B cell (primary cell): ENCODE measurements at regions of chr17 and their contacts with region 1.

Region 1: DNA sequence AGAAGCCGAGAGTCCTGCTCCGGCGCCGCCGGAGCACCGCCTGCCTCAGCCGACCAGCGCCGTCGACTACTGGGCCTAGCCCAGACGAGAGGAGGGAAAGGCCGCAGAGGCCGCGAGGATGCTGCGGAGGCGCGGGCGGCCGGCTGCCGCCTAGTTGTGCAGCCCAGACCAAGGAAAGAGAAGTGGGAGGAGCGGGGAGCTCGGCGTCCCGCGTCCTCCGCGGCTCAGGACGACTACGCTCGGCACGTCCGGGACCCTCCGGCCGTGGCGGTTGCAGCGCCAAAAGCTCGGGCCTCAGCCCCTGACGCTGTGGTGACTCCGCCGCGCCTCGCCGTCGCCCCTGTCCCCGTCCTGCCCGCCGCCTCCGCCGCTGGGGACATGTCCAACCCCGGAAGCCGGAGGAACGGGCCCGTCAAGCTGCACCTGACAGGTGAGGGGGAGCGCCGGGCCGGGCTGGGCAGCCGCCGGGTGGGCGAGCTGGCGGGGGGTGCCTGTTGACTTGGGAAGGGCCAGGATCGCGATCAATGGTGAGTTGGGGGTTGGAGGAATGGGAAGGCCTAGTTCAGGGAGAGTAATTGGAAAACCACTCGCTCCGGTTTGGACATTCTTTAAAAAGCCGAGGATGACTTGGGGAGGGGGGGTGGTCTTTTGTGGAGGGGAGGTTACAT is 37.7 kb downstream of the RNF135 start:
- DNase-seq: peak; percentile 75
- ATAC-seq: peak; percentile 79
- H3K4me3 ChIP-seq: peak overlapping the region; percentile 47 to 86 (median 69)
- H3K4me3 Mint-ChIP-seq: peak overlapping the region; percentile 96
- H3K27ac ChIP-seq: peak overlapping the region; percentile 41 to 77
- H3K27ac Mint-ChIP-seq: peak overlapping the region; percentile 95
- H3K4me1 ChIP-seq: peaks cover 3 to 12% of the 10 kb centered on the region in 2 donors
- H3K4me1 Mint-ChIP-seq: peaks cover 24% of the 10 kb centered on the region
- H3K27me3 ChIP-seq: no peaks in the 10 kb centered on the region
- H3K27me3 Mint-ChIP-seq: no peaks in the 10 kb centered on the region
- CTCF ChIP-seq: no peak

Region 2: DNA sequence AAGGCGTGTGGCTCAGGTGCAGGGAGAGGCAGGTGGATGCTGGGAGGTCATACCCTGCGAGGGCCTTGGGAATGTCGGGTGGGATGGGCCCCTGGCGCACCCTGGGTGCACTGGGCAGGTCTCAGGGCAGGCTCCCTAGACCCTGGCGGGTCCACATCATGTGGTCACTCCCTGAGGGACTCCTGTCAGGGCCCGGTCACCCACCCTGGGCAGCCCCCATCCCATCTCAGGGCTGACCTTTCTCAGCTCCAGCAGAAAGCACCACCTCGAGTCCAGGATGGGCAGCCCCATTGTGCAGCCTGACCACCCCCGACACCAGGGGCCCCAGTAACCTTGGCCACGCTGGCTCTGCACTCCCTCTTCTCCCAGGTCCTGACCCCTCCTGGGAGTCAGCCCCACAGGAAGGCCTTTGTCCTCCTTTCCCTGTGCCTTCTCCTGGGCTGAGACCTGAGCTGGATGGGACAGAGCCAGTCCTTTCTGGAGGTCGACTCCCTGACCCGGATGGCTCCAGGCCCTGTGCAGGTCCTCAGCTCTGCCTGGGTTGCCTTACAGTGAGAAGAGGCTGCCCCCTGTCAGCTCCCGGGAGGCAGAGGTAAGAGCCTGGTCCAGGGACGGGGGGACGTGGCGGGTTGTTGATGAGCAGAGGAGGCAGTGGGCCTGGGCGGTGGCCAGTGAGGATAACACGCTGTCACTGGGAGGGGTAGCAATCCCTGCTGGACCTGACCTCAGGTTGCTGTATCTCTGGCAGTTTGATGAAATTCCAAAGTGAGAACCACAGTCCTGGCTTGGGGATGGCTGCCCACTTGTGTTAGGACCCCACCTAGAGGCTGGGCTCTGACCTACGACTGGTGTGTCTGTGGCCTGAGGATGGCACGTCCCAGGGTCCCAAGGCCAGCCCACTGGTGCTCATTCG is 453.4 kb before region 1 on chr17:
- CTCF ChIA-PET with region 1: no interaction called
- POLR2A ChIA-PET with region 1: no interaction called
- intact Hi-C with region 1: no loop called
- DNase-seq: peak; percentile 30
- ATAC-seq: no peak
- H3K4me3 ChIP-seq: no peak overlapping the region
- H3K4me3 Mint-ChIP-seq: no peak overlapping the region
- H3K27ac ChIP-seq: no peak overlapping the region
- H3K27ac Mint-ChIP-seq: no peak overlapping the region
- H3K4me1 ChIP-seq: peaks cover 20 to 38% of the 10 kb centered on the region in 2 donors
- H3K4me1 Mint-ChIP-seq: peaks cover 34% of the 10 kb centered on the region
- H3K27me3 ChIP-seq: no peaks in the 10 kb centered on the region
- H3K27me3 Mint-ChIP-seq: no peaks in the 10 kb centered on the region
- CTCF ChIP-seq: no peak

Region 3: DNA sequence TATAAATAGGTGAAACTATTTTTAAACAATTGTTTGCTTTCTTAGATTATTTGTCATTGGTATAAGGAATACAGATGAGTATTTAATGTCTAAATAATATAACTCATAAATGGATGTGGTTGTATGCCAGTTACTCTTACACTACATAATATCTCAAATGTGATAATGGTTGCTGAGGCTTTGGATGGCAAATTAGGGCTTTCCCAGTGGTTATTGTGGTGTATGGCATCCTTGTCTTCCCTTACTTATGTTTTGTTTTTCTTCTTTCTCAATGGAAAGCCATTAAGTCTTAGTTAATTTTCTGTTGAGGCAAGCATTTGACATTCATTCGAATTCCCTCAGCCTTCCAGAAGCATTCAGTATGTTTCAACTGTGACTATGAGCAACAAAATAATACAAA is 278.1 kb after region 1 on chr17:
- CTCF ChIA-PET with region 1: no interaction called
- POLR2A ChIA-PET with region 1: interaction called, 11 read pairs
- intact Hi-C with region 1: no loop called
- DNase-seq: no peak
- ATAC-seq: no peak
- H3K4me3 ChIP-seq: no peak overlapping the region
- H3K4me3 Mint-ChIP-seq: no peak overlapping the region
- H3K27ac ChIP-seq: no peak overlapping the region
- H3K27ac Mint-ChIP-seq: no peak overlapping the region
- H3K4me1 ChIP-seq: no peaks in the 10 kb centered on the region
- H3K4me1 Mint-ChIP-seq: no peaks in the 10 kb centered on the region
- H3K27me3 ChIP-seq: no peaks in the 10 kb centered on the region
- H3K27me3 Mint-ChIP-seq: no peaks in the 10 kb centered on the region
- CTCF ChIP-seq: no peak